CD4-positive, alpha-beta T cell (primary cell): ENCODE measurements at regions of chr12 and their contacts with region 1.

Region 1: DNA sequence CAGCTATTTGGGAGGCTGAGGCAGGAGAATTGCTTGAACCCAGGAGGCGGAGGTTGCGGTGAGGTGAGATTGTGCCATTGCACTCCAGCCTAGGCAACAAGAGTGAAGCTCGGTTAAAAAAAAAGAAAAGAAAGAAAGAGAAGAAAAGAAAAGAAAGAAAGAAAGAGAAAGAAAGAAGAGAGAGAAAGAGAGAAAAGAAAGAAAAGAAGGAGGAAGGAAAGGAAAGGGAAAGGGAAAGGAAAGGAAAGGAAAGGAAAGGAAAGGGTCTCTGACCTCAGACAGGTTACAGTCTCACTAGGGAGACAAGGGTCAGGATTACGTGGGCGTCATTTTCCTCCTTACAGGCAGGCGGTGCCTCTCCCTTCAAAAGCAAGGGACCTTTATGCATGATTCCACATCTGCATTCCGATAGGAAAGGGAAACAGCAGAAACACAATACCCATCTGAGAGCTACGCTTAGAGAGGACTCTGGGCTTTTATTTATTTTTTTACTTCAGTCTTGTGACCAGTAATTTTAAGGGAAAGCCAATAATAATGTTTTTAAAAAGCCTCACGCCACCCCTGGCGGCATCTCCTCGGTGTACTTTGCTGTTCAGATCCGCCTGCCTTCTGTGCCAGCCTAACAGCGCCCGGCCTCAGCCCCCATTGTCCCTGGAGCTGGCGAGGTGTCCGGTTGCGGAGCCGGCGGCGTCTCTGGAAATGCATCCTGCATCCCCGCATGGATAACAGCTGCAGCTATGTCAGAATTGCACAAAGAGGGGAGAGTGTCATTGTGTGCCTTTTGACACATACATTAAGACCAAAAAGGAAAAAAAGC is 945 bp upstream of the HIP1R start:
- DNase-seq: peak in 5 of 14 experiments; percentile 11 to 59 (median 37)
- ATAC-seq: peak; percentile 8
- H3K4me3 ChIP-seq: peak overlapping the region; percentile 57
- H3K4me3 Mint-ChIP-seq: peak overlapping the region; percentile 98
- H3K27ac ChIP-seq: no peak overlapping the region
- H3K27ac Mint-ChIP-seq: peak overlapping the region; percentile 89
- H3K4me1 ChIP-seq: peaks cover 24% of the 10 kb centered on the region
- H3K4me1 Mint-ChIP-seq: peaks cover 41% of the 10 kb centered on the region
- H3K27me3 ChIP-seq: no peaks in the 10 kb centered on the region
- H3K27me3 Mint-ChIP-seq: no peaks in the 10 kb centered on the region
- CTCF ChIP-seq: no peak

Region 2: GRCh38 chr12:122471324-122472226 is 362.7 kb before region 1 on chr12:
- CTCF ChIA-PET with region 1: no interaction called
- POLR2A ChIA-PET with region 1: no interaction called
- intact Hi-C with region 1: no loop called
- DNase-seq: peak in 5 of 14 experiments; percentile 4 to 81 (median 73)
- ATAC-seq: peak; percentile 85
- H3K4me3 ChIP-seq: no peak overlapping the region
- H3K4me3 Mint-ChIP-seq: no peak overlapping the region
- H3K27ac ChIP-seq: no peak overlapping the region
- H3K27ac Mint-ChIP-seq: peak overlapping the region; percentile 2
- H3K4me1 ChIP-seq: no peaks in the 10 kb centered on the region
- H3K4me1 Mint-ChIP-seq: peaks cover 9% of the 10 kb centered on the region
- H3K27me3 ChIP-seq: no peaks in the 10 kb centered on the region
- H3K27me3 Mint-ChIP-seq: no peaks in the 10 kb centered on the region
- CTCF ChIP-seq: peak; percentile 91

Region 3: DNA sequence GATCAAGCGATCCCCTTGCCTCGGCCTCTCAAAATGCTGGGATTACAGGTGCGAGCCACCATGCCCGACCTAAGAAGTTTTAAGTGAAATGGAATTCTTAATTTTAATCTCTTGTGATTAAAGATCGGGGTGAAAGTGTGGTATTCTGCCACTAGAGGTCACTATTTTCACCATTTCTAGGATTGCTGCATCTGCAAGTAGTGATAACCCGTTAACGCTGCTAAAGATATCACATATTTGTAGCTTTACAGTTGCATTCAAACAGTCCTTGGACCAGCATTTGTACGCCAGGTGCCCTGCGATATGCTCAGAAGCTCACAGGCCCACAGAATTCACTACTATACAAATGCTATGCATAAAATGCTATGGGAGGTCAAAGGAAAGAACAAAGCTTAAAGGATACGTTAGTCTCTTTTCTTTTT is 40.6 kb before region 1 on chr12:
- CTCF ChIA-PET with region 1: no interaction called
- POLR2A ChIA-PET with region 1: interaction called, 15 read pairs
- intact Hi-C with region 1: loop called (anchors 1 to 5 kb)
- DNase-seq: peak in 5 of 14 experiments; percentile 18 to 76 (median 66)
- ATAC-seq: peak; percentile 87
- H3K4me3 ChIP-seq: no peak overlapping the region
- H3K4me3 Mint-ChIP-seq: no peak overlapping the region
- H3K27ac ChIP-seq: no peak overlapping the region
- H3K27ac Mint-ChIP-seq: no peak overlapping the region
- H3K4me1 ChIP-seq: peaks cover 7% of the 10 kb centered on the region
- H3K4me1 Mint-ChIP-seq: no peaks in the 10 kb centered on the region
- H3K27me3 ChIP-seq: no peaks in the 10 kb centered on the region
- H3K27me3 Mint-ChIP-seq: no peaks in the 10 kb centered on the region
- CTCF ChIP-seq: peak; percentile 88

Region 4: DNA sequence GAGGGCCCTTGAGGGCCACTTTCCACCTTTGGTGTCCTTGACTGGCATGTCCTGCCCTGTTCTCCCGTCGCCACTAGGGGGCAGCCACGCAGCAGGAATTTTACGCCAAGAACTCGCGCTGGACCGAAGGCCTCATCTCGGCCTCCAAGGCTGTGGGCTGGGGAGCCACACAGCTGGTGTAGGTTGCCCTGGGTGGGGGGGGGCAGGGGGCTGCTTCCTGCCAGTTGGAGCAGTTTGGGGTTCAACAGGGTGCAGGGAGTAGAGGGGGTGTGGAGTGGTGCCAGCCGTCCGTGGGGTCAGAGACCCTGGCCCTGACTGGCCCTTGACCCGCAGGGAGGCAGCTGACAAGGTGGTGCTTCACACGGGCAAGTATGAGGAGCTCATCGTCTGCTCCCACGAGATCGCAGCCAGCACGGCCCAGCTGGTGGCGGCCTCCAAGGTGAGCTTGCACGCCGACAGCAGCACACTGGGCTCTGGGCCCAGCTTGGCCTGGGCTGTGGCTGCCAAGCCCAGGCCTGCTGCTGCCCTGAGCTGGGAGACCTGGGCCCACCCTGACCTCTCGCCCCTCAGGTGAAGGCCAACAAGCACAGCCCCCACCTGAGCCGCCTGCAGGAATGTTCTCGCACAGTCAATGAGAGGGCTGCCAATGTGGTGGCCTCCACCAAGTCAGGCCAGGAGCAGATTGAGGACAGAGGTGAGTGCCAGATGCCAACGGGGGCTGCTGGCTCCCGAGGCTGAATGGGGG is 26.2 kb after region 1 on chr12:
- CTCF ChIA-PET with region 1: no interaction called
- POLR2A ChIA-PET with region 1: interaction called, 8 read pairs
- intact Hi-C with region 1: loop called in 1 of 2 experiments (anchors 2 kb)
- DNase-seq: peak; percentile 72 to 89 (median 79)
- ATAC-seq: peak; percentile 52
- H3K4me3 ChIP-seq: no peak overlapping the region
- H3K4me3 Mint-ChIP-seq: no peak overlapping the region
- H3K27ac ChIP-seq: no peak overlapping the region
- H3K27ac Mint-ChIP-seq: peak overlapping the region; percentile 61
- H3K4me1 ChIP-seq: peaks cover 9% of the 10 kb centered on the region
- H3K4me1 Mint-ChIP-seq: no peaks in the 10 kb centered on the region
- H3K27me3 ChIP-seq: no peaks in the 10 kb centered on the region
- H3K27me3 Mint-ChIP-seq: no peaks in the 10 kb centered on the region
- CTCF ChIP-seq: peak; percentile 78

Region 5: DNA sequence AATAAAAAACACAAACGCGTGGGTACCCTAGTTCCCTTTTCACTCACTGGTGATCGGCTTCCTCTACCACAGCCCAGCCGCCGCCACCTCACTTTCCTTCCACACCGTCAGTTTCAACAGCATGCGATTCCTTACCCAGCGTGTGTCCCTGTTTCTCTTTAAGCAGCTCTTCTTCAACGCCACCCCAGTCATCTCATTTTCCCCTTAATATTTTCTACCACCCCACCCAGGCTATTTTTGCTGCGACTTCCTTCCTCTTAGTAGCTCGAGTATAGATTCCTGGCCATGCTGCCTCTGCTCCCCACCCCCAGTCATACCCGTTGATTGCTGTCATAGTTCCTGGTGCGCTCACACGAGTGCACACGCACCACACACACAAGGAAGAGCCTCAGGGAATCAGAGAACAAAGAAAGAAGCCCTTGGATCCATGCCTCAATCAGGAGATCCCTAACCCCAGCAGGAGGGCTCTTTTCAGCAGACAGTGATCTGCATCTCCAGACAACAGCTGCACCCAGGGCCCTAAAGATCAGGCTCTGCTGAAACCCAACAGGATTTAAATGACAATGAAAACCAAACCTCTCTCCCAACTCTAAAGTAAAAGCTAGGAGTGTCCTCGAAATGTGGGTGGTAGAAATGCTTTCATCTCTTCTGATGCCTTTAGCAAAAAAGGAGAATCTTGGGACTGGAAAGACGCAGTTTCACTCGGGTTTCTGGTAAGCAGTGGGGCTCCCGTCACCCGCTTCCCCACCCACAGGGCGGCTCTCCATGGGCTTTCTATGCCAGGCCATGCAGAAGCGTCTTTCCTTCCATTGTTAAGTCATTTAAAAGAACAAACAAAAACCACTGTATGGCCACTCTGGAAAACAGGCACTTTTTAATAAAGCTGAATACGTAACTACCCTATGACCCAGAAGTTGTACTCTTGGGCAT is 37.8 kb after region 1 on chr12:
- CTCF ChIA-PET with region 1: no interaction called
- POLR2A ChIA-PET with region 1: interaction called, 13 read pairs
- intact Hi-C with region 1: no loop called
- DNase-seq: peak in 6 of 14 experiments; percentile 30 to 72 (median 58)
- ATAC-seq: peak; percentile 43
- H3K4me3 ChIP-seq: peak overlapping the region; percentile 51
- H3K4me3 Mint-ChIP-seq: peak overlapping the region; percentile 86
- H3K27ac ChIP-seq: peak overlapping the region; percentile 18 to 74
- H3K27ac Mint-ChIP-seq: peak overlapping the region; percentile 61
- H3K4me1 ChIP-seq: peaks cover 65% of the 10 kb centered on the region
- H3K4me1 Mint-ChIP-seq: peaks cover 71% of the 10 kb centered on the region
- H3K27me3 ChIP-seq: no peaks in the 10 kb centered on the region
- H3K27me3 Mint-ChIP-seq: no peaks in the 10 kb centered on the region
- CTCF ChIP-seq: no peak

Region 6: GRCh38 chr12:122895705-122896636 is 61.7 kb after region 1 on chr12 and contains the start of gene VPS37B:
- CTCF ChIA-PET with region 1: no interaction called
- POLR2A ChIA-PET with region 1: interaction called, 22 read pairs
- intact Hi-C with region 1: loop called in 1 of 2 experiments (anchors 2 kb)
- DNase-seq: peak; percentile 68 to 95 (median 84)
- ATAC-seq: peak; percentile 66
- H3K4me3 ChIP-seq: peak within 1 kb of the TSS; percentile 64
- H3K4me3 Mint-ChIP-seq: peak within 1 kb of the TSS; percentile 87
- H3K27ac ChIP-seq: peak within 1 kb of the TSS; percentile 83 to 85
- H3K27ac Mint-ChIP-seq: peak within 1 kb of the TSS; percentile 98
- H3K4me1 ChIP-seq: peaks cover 68% of the 10 kb centered on the region
- H3K4me1 Mint-ChIP-seq: peaks cover 93% of the 10 kb centered on the region
- H3K27me3 ChIP-seq: no peaks in the 10 kb centered on the region
- H3K27me3 Mint-ChIP-seq: no peaks in the 10 kb centered on the region
- CTCF ChIP-seq: no peak
- total RNA-seq, gene VPS37B: 97.7 to 104 TPM

Region 7: DNA sequence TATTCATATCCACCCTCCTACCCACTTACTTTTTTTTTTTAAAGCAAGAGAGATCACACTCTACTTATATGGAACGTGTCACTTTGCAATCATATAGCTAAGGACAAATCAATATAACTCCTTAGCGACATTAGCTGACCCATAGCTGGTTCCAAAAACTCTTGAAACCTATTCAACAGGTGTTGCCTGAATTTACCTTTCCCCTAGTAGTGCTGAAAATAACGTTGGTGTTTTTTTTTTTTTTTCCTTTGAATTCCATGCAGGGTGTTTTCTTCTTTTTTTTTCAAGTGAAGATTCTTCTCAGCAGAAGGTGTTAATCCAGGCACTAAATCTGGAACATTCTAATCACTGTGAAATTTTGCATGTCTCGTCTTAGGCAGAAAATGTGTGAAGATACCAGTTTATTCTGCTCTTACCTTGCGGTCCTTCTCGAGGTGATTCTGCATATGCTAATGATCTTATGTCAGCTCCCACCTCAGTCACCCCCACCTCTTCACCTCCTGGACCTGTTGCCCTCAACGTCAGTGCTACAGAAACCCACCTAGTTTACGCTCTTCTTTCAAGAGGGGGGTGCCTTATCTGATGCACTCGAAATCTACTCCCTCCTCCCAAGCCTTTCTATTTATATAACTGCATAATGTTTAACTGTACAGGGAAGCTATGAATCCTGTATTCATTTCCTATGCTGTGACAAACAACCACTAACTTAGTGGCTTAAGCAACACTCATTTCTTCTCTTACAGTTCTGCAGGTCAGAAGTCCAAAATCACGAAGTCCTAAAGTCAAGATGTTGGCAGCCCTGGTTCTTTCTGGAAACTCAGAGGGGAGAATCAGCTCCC is 68.8 kb after region 1 on chr12:
- CTCF ChIA-PET with region 1: no interaction called
- POLR2A ChIA-PET with region 1: interaction called, 22 read pairs
- intact Hi-C with region 1: loop called in 1 of 2 experiments (anchors 2 kb)
- DNase-seq: no peak
- ATAC-seq: no peak
- H3K4me3 ChIP-seq: no peak overlapping the region
- H3K4me3 Mint-ChIP-seq: peak overlapping the region; percentile 66
- H3K27ac ChIP-seq: no peak overlapping the region
- H3K27ac Mint-ChIP-seq: no peak overlapping the region
- H3K4me1 ChIP-seq: peaks cover 34% of the 10 kb centered on the region
- H3K4me1 Mint-ChIP-seq: peaks cover 42% of the 10 kb centered on the region
- H3K27me3 ChIP-seq: no peaks in the 10 kb centered on the region
- H3K27me3 Mint-ChIP-seq: no peaks in the 10 kb centered on the region
- CTCF ChIP-seq: no peak

Region 8: GRCh38 chr12:122965851-122966722 is 131.8 kb after region 1 on chr12 and contains the start of gene ABCB9:
- CTCF ChIA-PET with region 1: no interaction called
- POLR2A ChIA-PET with region 1: interaction called, 14 read pairs
- intact Hi-C with region 1: no loop called
- DNase-seq: peak; percentile 91 to 99 (median 95)
- ATAC-seq: peak; percentile 97
- H3K4me3 ChIP-seq: peak within 1 kb of the TSS; percentile 78
- H3K4me3 Mint-ChIP-seq: peak within 1 kb of the TSS; percentile 81
- H3K27ac ChIP-seq: peak within 1 kb of the TSS; percentile 31 to 44
- H3K27ac Mint-ChIP-seq: peak within 1 kb of the TSS; percentile 14
- H3K4me1 ChIP-seq: peaks cover 28% of the 10 kb centered on the region
- H3K4me1 Mint-ChIP-seq: peaks cover 5% of the 10 kb centered on the region
- H3K27me3 ChIP-seq: no peaks in the 10 kb centered on the region
- H3K27me3 Mint-ChIP-seq: no peaks in the 10 kb centered on the region
- CTCF ChIP-seq: no peak
- total RNA-seq, gene ABCB9: 5.4 to 6.2 TPM

Region 9: DNA sequence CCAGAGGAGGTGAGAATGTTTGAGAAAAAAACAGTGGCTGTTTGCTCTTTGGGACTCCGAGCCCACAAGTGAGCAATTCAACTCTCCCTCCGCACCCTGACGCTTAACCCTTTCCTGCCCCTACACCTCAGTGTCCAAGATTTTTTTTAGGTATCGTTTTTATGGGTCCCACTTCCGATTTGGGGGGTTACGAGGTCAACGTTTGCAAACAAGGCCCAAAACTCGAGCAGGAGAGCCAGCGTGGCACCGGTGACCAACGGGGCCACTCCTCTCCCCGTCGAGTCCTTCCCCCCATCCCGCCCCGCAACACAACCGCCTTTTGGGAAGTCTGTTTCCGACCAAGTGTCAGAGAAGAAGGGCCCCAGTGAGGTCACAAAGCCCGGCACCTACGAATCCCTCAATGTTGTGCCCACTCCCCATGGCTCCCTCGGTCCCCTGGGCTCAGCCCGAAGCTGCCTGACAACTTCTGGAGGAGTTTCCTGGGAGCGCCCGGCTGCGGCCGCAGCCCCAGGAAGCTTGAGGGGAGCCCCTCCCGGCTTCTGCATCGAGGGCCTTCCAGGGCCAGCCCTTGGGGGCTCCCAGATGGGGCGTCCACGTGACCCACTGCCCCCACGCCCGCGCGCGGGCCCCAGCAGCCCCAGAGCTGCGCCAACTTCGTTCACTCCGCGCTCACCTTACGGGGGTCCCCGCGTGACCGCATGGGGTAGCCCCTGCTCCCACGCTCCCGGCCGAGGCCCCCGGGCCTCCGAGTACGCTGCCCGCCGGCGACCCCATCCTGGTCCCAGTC is 436.1 kb after region 1 on chr12:
- CTCF ChIA-PET with region 1: no interaction called
- POLR2A ChIA-PET with region 1: no interaction called
- intact Hi-C with region 1: no loop called
- DNase-seq: peak in 5 of 14 experiments; percentile 5 to 43 (median 31)
- ATAC-seq: no peak
- H3K4me3 ChIP-seq: peak overlapping the region; percentile 41
- H3K4me3 Mint-ChIP-seq: peak overlapping the region; percentile 92
- H3K27ac ChIP-seq: no peak overlapping the region
- H3K27ac Mint-ChIP-seq: peak overlapping the region; percentile 53
- H3K4me1 ChIP-seq: peaks cover 38% of the 10 kb centered on the region
- H3K4me1 Mint-ChIP-seq: peaks cover 32% of the 10 kb centered on the region
- H3K27me3 ChIP-seq: no peaks in the 10 kb centered on the region
- H3K27me3 Mint-ChIP-seq: no peaks in the 10 kb centered on the region
- CTCF ChIP-seq: no peak